B cell (primary cell): ENCODE measurements at regions of chr1 and their contacts with region 1.

Region 1: GRCh38 chr1:17540255-17541001 is 930 bp downstream of the ARHGEF10L start:
- DNase-seq: no peak
- ATAC-seq: no peak
- H3K4me3 ChIP-seq: peak overlapping the region in 4 of 5 experiments; percentile 15 to 50 (median 46)
- H3K4me3 Mint-ChIP-seq: peak overlapping the region; percentile 80
- H3K27ac ChIP-seq: no peak overlapping the region
- H3K27ac Mint-ChIP-seq: peak overlapping the region; percentile 37
- H3K4me1 ChIP-seq: peaks cover 11 to 37% of the 10 kb centered on the region in 2 donors
- H3K4me1 Mint-ChIP-seq: peaks cover 33% of the 10 kb centered on the region
- H3K27me3 ChIP-seq: peaks cover 0 to 34% (median 13%) of the 10 kb centered on the region in 4 experiments
- H3K27me3 Mint-ChIP-seq: peaks cover 26% of the 10 kb centered on the region
- CTCF ChIP-seq: no peak

Region 2: GRCh38 chr1:17190010-17190995 is 350.1 kb before region 1 on chr1:
- CTCF ChIA-PET with region 1: no interaction called
- POLR2A ChIA-PET with region 1: interaction called, 11 read pairs
- intact Hi-C with region 1: no loop called
- DNase-seq: no peak
- ATAC-seq: no peak
- H3K4me3 ChIP-seq: no peak overlapping the region
- H3K4me3 Mint-ChIP-seq: no peak overlapping the region
- H3K27ac ChIP-seq: no peak overlapping the region
- H3K27ac Mint-ChIP-seq: peak overlapping the region; percentile 56
- H3K4me1 ChIP-seq: peaks cover 9 to 23% of the 10 kb centered on the region in 2 donors
- H3K4me1 Mint-ChIP-seq: peaks cover 27% of the 10 kb centered on the region
- H3K27me3 ChIP-seq: no peaks in the 10 kb centered on the region
- H3K27me3 Mint-ChIP-seq: no peaks in the 10 kb centered on the region
- CTCF ChIP-seq: no peak

Region 3: DNA sequence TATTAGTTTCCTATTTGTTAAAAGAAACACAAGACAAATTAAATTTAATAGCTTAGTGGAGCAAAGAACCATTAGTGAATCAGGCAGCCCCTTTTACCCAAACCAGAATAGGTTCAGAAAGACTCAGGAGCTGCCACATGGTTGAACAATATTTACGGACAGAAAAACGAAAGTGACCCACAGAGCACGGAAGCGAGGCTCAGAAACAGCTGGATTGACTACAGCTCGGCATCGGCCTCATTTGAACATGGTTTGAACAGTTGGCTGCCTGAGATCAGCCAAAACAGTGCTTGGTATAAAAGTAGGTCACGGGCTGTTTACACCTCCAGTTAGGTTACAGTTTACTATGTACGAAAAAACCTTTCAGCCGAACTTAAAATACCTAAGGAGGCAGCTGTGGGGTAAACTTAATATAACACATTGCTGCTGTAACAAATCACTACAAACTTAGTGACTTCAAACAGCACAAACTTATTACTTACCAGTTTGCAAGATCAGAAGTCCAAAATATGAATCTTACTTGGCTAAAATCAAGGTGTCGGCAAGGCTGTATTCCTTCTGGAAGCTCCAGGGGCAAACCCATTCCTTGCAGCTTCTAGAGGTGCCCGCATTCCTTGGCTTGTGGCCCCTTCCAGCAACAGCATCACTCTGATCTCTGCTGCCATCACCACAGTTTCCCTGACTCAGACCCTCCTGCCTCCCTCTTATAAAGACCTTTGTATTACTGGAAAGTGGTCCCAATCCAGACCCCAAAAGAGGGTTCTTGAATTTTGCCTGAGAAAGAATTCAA is 220.7 kb before region 1 on chr1:
- CTCF ChIA-PET with region 1: no interaction called
- POLR2A ChIA-PET with region 1: no interaction called
- intact Hi-C with region 1: no loop called
- DNase-seq: no peak
- ATAC-seq: no peak
- H3K4me3 ChIP-seq: no peak overlapping the region
- H3K4me3 Mint-ChIP-seq: no peak overlapping the region
- H3K27ac ChIP-seq: no peak overlapping the region
- H3K27ac Mint-ChIP-seq: no peak overlapping the region
- H3K4me1 ChIP-seq: no peaks in the 10 kb centered on the region
- H3K4me1 Mint-ChIP-seq: no peaks in the 10 kb centered on the region
- H3K27me3 ChIP-seq: no peaks in the 10 kb centered on the region
- H3K27me3 Mint-ChIP-seq: peaks cover 7% of the 10 kb centered on the region
- CTCF ChIP-seq: no peak

Region 4: GRCh38 chr1:17551755-17552234 is 11.4 kb after region 1 on chr1:
- CTCF ChIA-PET with region 1: no interaction called
- POLR2A ChIA-PET with region 1: no interaction called
- intact Hi-C with region 1: no loop called
- DNase-seq: no peak
- ATAC-seq: no peak
- H3K4me3 ChIP-seq: no peak overlapping the region
- H3K4me3 Mint-ChIP-seq: no peak overlapping the region
- H3K27ac ChIP-seq: no peak overlapping the region
- H3K27ac Mint-ChIP-seq: no peak overlapping the region
- H3K4me1 ChIP-seq: no peaks in the 10 kb centered on the region
- H3K4me1 Mint-ChIP-seq: no peaks in the 10 kb centered on the region
- H3K27me3 ChIP-seq: peaks cover 0 to 4% (median 0%) of the 10 kb centered on the region in 4 experiments
- H3K27me3 Mint-ChIP-seq: peaks cover 31% of the 10 kb centered on the region
- CTCF ChIP-seq: no peak

Region 5: DNA sequence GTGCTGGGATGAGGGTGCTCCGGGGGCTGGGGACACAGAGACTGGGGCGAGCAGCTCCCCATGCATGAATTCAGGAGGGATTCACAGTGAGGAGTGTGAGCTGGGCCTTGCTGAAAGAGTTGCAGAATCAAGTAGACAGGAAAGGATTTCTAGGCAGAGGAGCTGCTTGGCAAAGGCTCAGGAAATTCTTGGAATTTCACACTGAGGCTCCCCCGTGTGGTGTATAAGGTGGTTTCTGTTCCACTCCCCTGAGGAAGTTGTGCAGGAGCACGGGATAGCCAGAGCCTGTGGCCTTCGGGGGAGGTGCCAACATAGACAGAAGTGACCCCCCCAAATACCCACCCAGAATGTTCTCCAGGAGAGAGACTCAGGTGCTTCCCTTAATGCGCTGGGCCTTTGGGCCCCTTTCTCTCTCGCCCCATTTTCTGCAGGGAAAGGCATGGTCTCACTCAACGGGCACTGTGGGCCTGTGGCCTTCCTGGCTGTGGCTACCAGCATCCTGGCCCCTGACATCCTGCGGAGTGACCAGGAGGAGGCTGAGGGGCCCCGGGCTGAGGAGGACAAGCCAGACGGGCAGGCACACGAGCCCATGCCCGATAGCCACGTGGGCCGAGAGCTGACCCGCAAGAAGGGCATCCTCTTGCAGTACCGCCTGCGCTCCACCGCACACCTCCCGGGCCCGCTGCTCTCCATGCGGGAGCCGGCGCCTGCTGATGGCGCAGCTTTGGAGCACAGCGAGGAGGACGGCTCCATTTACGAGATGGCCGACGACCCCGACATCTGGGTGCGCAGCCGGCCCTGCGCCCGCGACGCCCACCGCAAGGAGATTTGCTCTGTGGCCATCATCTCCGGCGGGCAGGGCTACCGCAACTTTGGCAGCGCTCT is 156.2 kb after region 1 on chr1:
- CTCF ChIA-PET with region 1: no interaction called
- POLR2A ChIA-PET with region 1: no interaction called
- intact Hi-C with region 1: no loop called
- DNase-seq: no peak
- ATAC-seq: no peak
- H3K4me3 ChIP-seq: no peak overlapping the region
- H3K4me3 Mint-ChIP-seq: no peak overlapping the region
- H3K27ac ChIP-seq: no peak overlapping the region
- H3K27ac Mint-ChIP-seq: no peak overlapping the region
- H3K4me1 ChIP-seq: no peaks in the 10 kb centered on the region
- H3K4me1 Mint-ChIP-seq: no peaks in the 10 kb centered on the region
- H3K27me3 ChIP-seq: no peaks in the 10 kb centered on the region
- H3K27me3 Mint-ChIP-seq: peaks cover 19% of the 10 kb centered on the region
- CTCF ChIP-seq: no peak

Region 6: DNA sequence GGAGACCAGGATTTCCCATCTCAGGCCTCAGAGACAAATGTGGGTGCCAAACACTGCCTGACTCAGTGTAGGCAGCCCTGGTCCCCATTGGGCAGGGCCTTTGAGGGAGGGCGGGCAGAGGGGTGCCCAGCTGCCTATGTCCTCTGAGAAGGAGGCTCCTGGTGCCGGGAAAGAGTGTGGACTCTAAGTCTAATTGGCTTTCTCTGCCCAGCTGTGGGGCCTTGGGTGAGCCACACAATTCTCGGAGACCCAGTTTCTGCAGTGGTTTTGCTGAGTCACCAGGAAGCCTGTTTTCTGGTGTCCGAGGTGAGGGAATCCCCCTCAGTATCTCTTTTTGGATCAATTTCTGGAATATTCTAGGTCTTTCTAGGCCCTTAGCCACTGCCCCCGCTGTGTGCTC is 179.4 kb after region 1 on chr1:
- CTCF ChIA-PET with region 1: no interaction called
- POLR2A ChIA-PET with region 1: interaction called, 25 read pairs
- intact Hi-C with region 1: no loop called
- DNase-seq: no peak
- ATAC-seq: no peak
- H3K4me3 ChIP-seq: no peak overlapping the region
- H3K4me3 Mint-ChIP-seq: no peak overlapping the region
- H3K27ac ChIP-seq: no peak overlapping the region
- H3K27ac Mint-ChIP-seq: no peak overlapping the region
- H3K4me1 ChIP-seq: no peaks in the 10 kb centered on the region
- H3K4me1 Mint-ChIP-seq: no peaks in the 10 kb centered on the region
- H3K27me3 ChIP-seq: peaks cover 0 to 3% (median 1%) of the 10 kb centered on the region in 4 experiments
- H3K27me3 Mint-ChIP-seq: peaks cover 6% of the 10 kb centered on the region
- CTCF ChIP-seq: no peak